ENCODE measurements at regions of chr10 and their contacts with region 1.

Region 1: DNA sequence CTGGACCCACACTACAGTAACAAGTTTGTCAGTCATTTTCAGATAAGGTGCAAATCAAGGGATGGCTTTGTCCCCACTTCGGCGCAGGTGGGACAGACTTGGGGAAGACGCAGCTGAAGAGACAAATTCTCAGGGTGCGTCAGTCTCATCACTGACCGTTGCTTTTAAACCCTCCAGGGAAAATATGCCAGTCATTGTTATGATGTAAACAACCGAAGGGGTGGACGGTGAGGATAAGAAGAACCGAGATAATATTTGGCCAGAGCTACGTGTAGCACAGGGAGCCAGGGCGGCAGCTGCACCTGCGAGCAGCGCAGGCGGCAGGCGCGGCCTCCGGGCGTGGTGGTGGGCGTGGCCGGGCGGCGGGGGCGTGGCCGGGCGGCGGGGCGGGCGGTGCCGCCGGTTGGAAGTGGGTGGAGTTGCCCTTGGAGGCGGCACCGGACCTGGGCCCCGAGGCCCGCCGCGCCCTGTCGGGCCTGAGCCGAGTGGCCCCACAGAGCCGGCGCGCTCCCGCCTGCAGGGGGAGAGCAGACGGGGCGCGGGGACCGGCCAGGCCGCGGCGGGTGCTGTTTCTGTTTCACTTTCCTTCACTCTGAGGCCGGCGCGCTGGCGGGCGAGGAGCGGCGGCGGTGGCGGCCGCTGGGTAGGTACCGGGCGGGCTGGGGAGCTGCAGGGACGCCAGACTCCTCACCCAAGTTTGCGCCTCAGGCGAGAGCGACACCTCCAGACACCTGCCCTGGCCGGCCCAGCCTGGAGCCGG is at the start of gene PCGF5:
- DNase-seq: peak; percentile 97
- ATAC-seq: peak; percentile 96
- H3K4me3 Mint-ChIP-seq: peak within 1 kb of the TSS; percentile 93
- H3K27ac Mint-ChIP-seq: peak within 1 kb of the TSS; percentile 91
- H3K4me1 Mint-ChIP-seq: peaks cover 68% of the 10 kb centered on the region
- H3K27me3 Mint-ChIP-seq: no peaks in the 10 kb centered on the region
- CTCF ChIP-seq: no peak
- total RNA-seq, gene PCGF5: 70.2 and 72.9 TPM in 2 replicates

Region 2: DNA sequence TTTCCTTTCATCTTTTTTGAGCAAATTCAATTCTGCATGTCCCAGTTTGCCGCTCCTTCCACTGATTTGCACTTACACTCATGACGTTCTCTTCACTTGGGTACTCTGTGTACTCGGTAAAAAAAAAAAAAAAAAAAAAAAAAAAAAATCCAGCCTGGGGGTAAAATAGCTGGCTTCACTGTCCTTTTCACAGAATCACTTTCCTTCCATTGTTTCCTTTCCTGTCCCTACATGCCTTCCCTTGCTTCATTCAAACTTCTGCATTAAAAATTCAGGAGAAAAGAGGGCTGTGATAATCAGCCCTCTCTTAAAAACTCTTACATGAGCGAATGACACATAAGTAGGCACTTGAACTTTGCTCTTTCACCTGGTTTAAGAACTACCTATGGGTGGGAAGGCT is 308.2 kb before region 1 on chr10:
- CTCF ChIA-PET with region 1: no interaction called
- POLR2A ChIA-PET with region 1: no interaction called
- intact Hi-C with region 1: loop called (anchors 1 kb)
- DNase-seq: no peak
- ATAC-seq: no peak
- H3K4me3 Mint-ChIP-seq: no peak overlapping the region
- H3K27ac Mint-ChIP-seq: no peak overlapping the region
- H3K4me1 Mint-ChIP-seq: peaks cover 19% of the 10 kb centered on the region
- H3K27me3 Mint-ChIP-seq: no peaks in the 10 kb centered on the region
- CTCF ChIP-seq: no peak

Region 3: GRCh38 chr10:90977162-90977854 is 243.1 kb before region 1 on chr10:
- CTCF ChIA-PET with region 1: no interaction called
- POLR2A ChIA-PET with region 1: no interaction called
- intact Hi-C with region 1: loop called (anchors 1 kb)
- DNase-seq: peak; percentile 48
- ATAC-seq: peak; percentile 94
- H3K4me3 Mint-ChIP-seq: peak overlapping the region; percentile 46
- H3K27ac Mint-ChIP-seq: peak overlapping the region; percentile 86
- H3K4me1 Mint-ChIP-seq: peaks cover 38% of the 10 kb centered on the region
- H3K27me3 Mint-ChIP-seq: no peaks in the 10 kb centered on the region
- CTCF ChIP-seq: no peak

Region 4: GRCh38 chr10:91088300-91089140 is 131.9 kb before region 1 on chr10:
- CTCF ChIA-PET with region 1: interaction called, 3 read pairs
- POLR2A ChIA-PET with region 1: no interaction called
- intact Hi-C with region 1: loop called (anchors 1 kb)
- DNase-seq: no peak
- ATAC-seq: peak; percentile 69
- H3K4me3 Mint-ChIP-seq: no peak overlapping the region
- H3K27ac Mint-ChIP-seq: no peak overlapping the region
- H3K4me1 Mint-ChIP-seq: peaks cover 6% of the 10 kb centered on the region
- H3K27me3 Mint-ChIP-seq: no peaks in the 10 kb centered on the region
- CTCF ChIP-seq: no peak

Region 5: GRCh38 chr10:91198781-91199180 is 21.6 kb before region 1 on chr10:
- CTCF ChIA-PET with region 1: interaction called, 3 read pairs
- POLR2A ChIA-PET with region 1: interaction called, 25 read pairs
- intact Hi-C with region 1: loop called (anchors 1 kb)
- DNase-seq: no peak
- ATAC-seq: peak; percentile 23
- H3K4me3 Mint-ChIP-seq: peak overlapping the region; percentile 11
- H3K27ac Mint-ChIP-seq: peak overlapping the region; percentile 86
- H3K4me1 Mint-ChIP-seq: peaks cover 88% of the 10 kb centered on the region
- H3K27me3 Mint-ChIP-seq: no peaks in the 10 kb centered on the region
- CTCF ChIP-seq: no peak

Region 6: DNA sequence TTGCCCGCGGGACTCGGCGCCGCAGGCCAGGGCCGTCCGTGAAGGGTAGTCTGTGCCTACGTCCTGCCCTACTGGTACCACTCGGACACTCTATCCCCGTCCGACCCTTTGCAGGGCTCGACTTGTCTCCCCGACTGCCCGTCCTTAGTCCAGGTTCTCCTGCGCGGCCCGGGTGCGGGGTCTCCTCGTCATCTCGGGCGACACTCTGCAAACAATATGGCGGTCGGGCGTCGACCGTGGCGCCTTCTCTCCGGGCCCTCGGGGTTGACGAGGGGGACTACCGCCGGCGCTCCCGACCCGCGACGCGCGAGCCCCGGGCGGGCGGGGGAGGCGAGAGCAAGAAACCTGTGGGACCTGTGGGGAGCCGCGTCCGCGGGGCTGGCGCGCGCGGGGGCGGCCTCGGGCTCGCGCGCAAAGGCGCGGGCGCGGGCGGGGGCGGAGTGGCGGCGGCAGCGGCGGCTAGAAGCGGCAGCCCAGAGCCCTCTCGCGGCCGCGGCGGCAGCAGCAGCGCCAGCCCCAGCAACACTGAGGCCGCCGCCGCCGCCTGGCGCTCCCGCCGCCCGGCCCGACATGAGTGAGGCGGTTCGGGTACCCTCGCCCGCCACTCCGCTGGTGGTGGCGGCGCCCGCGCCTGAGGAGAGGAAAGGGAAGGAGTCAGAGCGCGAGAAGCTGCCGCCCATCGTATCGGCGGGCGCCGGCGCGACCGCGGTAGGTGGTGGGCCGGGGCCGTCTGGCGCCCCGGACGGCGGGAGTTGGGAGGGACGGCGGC is 189.7 kb after region 1 on chr10 and contains the start of gene HECTD2:
- CTCF ChIA-PET with region 1: no interaction called
- POLR2A ChIA-PET with region 1: no interaction called
- intact Hi-C with region 1: loop called (anchors 2 kb)
- DNase-seq: peak; percentile 84
- ATAC-seq: peak; percentile 82
- H3K4me3 Mint-ChIP-seq: peak within 1 kb of the TSS; percentile 89
- H3K27ac Mint-ChIP-seq: peak within 1 kb of the TSS; percentile 90
- H3K4me1 Mint-ChIP-seq: peaks cover 13% of the 10 kb centered on the region
- H3K27me3 Mint-ChIP-seq: no peaks in the 10 kb centered on the region
- CTCF ChIP-seq: no peak
- total RNA-seq, gene HECTD2: 8.1 and 8.6 TPM in 2 replicates

Measured in activated B cell treated with CpG ODN at 0.5 μM for 24 hours (primary cell).